ENCODE measurements at regions of chr3 and their contacts with region 1.

Region 1: DNA sequence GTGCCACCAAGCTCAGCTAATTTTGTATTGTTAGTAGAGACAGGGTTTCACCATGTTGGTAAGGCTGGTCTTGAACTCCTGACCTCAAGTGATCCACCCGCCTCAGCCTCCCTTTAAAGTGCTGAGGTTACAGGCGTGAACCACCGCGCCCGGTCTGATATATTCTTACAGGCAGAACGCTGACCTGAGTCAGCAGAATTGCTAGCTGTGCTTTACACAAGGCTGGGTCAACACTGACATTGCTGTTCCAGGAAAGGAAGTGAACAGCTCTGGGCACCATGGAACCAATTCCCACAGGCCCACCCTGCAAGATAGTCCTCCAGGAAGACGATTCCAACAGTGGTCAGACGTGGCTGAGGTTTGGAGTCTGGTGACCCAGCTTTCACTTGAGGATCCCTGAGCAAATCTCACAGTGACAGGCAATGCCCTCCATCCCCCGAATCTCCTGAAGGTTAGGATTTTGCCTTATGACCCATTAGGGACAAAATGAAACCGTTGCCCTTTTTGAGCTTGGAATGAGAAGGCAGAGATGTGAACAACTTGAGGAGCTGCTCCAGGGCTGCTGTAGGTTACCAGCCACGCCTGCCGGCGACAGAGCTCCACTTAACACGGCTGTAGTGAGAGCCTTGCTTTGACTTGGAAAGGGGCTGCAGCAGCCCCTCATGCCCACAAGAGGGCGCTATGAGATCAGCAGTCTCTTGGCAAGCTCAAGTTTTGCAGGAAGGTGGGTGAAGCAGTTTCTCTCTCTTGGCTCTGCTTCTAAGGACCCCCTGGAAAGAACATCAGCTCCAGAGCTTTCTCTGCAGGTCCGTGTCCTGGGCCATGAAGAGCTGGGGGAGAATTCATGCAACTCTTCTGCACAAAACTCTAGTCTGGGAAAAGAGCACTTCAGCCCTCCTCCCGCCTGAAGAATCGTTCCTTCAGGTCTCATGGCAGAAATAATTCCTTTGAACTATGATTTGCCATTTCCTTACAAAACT is 74.1 kb downstream of the SENP2 start:
- DNase-seq: peak; percentile 69 to 84
- H3K4me3 ChIP-seq: no peak overlapping the region
- H3K4me1 ChIP-seq: no peaks in the 10 kb centered on the region
- H3K27me3 ChIP-seq: no peaks in the 10 kb centered on the region

Region 2: GRCh38 chr3:185789891-185790830 is 129.9 kb after region 1 on chr3:
- in situ Hi-C with region 1: no loop called
- DNase-seq: peak; percentile 21 to 95
- H3K4me3 ChIP-seq: no peak overlapping the region
- H3K4me1 ChIP-seq: peaks cover 50% of the 10 kb centered on the region
- H3K27me3 ChIP-seq: no peaks in the 10 kb centered on the region

Region 3: DNA sequence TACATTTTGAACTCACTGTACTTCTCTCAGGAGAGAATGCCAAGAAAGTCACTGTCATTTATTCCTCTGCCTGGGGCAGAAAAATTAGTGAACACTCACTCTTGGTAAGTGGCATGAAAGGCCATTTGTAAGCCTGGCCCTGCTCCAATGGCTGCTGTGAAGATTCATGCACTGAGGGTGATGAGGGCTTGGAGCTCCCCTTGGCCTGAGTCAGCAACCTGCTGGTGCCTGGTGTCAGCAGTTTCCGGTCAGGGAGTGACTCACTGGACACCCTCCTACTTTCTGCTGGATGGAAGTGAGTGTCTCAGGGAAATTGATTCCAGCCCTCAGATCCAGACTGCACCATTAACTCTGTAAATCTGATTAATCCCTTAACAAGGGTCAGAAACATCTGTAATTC is 240.0 kb after region 1 on chr3:
- in situ Hi-C with region 1: loop called (anchors 10 kb)
- DNase-seq: no peak
- H3K4me3 ChIP-seq: no peak overlapping the region
- H3K4me1 ChIP-seq: no peaks in the 10 kb centered on the region
- H3K27me3 ChIP-seq: no peaks in the 10 kb centered on the region

Region 4: DNA sequence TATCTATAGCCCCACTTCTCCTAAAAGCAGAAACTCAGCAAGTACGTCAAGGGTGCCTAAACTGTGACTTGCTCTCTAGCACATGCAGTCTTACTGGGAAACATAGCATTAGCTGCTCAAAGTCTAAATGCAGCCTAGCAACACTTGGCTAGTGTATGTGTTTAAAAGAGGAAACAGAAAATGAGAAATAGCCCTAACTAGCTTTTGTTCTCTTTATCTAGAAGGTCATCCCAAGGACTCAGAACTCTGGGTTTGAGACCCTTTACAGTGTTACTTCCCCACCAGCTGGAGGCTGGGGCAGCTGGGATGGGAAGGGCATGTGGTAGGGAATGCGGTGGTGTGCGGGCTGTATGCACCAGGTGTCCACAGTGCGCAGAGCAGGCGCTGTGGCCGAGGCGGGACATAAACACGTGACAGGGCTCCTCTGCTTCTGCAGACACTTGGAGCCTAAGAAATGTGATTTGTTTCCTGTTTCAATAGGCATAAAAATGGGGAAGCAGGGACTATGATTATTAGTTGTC is 435.4 kb after region 1 on chr3:
- in situ Hi-C with region 1: no loop called
- DNase-seq: no peak
- H3K4me3 ChIP-seq: no peak overlapping the region
- H3K4me1 ChIP-seq: peaks cover 10% of the 10 kb centered on the region
- H3K27me3 ChIP-seq: peaks cover 5% of the 10 kb centered on the region; the same call in 1 of the 2 replicates